ENCODE measurements at regions of chr16 and their contacts with region 1.

Region 1: GRCh38 chr16:50665128-50665878 is 15.8 kb downstream of the SNX20 start:
- DNase-seq: peak; percentile 69 to 92 (median 85)
- ATAC-seq: peak; percentile 60
- H3K4me3 ChIP-seq: peak overlapping the region; percentile 58
- H3K4me3 Mint-ChIP-seq: peak overlapping the region; percentile 86
- H3K27ac ChIP-seq: peak overlapping the region in 1 of 2 donors; percentile 18
- H3K27ac Mint-ChIP-seq: peak overlapping the region; percentile 88
- H3K4me1 ChIP-seq: peaks cover 39% of the 10 kb centered on the region
- H3K4me1 Mint-ChIP-seq: peaks cover 44% of the 10 kb centered on the region
- H3K27me3 ChIP-seq: no peaks in the 10 kb centered on the region
- H3K27me3 Mint-ChIP-seq: no peaks in the 10 kb centered on the region
- CTCF ChIP-seq: peak; percentile 89

Region 2: DNA sequence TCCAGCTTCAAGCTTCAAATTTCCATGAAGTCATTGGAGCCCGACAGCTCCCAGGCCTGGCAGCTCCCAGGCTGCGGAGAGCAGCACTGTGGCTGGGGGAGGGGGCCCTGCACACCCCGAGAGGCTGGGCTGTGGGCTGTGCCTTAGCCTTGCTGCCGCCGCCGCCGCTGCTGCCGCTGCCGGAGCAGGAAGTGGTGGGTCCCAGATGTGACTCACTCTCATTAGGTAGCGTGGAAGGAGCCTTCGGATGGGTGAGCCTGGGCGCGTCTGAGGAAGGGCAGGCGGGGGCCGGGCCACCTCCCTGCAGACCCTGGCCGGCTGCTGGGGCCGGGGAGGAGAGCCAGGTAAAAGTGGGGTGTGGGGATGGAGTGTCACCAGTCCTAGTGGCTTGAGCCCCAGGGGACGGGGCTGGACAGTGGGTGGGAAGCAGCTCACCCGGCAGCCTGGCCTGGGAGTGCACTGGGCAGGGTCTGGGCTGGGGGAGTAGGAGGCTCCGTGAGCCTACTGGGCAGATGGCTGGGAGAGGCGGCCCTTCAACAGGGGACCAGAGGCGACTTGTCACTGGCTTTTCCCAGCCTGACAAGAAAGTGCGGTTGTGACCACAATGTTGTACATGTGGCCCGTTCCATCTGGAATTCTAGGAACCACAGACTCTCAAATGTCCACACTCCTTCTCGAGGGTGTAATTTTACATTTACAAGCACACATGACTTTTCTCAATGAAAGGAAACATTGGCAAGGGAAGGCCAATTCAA is 398.8 kb before region 1 on chr16 and contains the start of gene ADCY7:
- CTCF ChIA-PET with region 1: interaction called, 3 read pairs
- POLR2A ChIA-PET with region 1: no interaction called
- intact Hi-C with region 1: loop called in 1 of 2 experiments (anchors 5 kb)
- DNase-seq: peak; percentile 66 to 90 (median 86)
- ATAC-seq: peak; percentile 91
- H3K4me3 ChIP-seq: peak within 1 kb of the TSS; percentile 98
- H3K4me3 Mint-ChIP-seq: peak within 1 kb of the TSS; percentile 99
- H3K27ac ChIP-seq: peak within 1 kb of the TSS; percentile 87 to 97
- H3K27ac Mint-ChIP-seq: peak within 1 kb of the TSS; percentile 100
- H3K4me1 ChIP-seq: peaks cover 65% of the 10 kb centered on the region
- H3K4me1 Mint-ChIP-seq: peaks cover 73% of the 10 kb centered on the region
- H3K27me3 ChIP-seq: no peaks in the 10 kb centered on the region
- H3K27me3 Mint-ChIP-seq: no peaks in the 10 kb centered on the region
- CTCF ChIP-seq: no peak
- total RNA-seq, gene ADCY7: 136 to 147 TPM

Region 3: DNA sequence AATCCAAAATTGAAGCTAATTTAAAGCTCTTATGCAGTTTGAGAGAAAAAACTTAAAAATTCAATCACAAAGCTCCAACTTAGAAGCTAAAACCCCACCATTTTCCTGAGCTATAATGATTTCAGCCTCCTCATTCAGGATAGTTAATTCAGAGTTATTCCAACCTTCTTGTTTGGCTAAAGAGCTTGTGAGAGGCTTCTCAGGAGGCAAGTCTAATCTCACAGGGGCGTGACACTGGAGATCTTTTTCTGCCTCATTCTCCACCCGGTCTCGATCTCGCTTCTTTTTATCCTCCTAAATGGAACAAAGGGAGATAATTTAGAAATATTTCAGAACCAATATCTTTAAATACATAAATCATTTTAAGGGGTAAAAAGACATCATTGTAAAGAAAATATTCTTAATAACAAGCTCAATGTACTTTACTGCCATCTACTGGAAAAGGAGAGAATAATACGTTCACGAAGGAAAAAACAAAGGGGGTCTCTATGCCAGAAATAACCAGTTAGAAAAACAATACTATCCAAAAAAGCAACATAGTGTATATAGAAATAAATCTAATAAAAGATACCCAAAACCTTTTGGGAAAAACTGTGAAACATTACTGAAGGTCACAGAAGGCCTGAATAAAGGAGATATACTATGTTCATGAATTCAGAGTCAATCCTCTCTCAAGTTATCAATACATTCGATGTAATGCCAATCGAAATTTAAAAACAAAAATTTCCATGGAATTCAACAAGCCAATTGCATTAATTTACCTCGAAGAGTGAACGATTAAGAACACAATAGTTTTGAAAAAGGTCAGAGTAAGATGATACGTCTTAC is 310.5 kb before region 1 on chr16:
- CTCF ChIA-PET with region 1: interaction called, 21 read pairs
- POLR2A ChIA-PET with region 1: interaction called, 7 read pairs
- intact Hi-C with region 1: no loop called
- DNase-seq: peak in 3 of 14 experiments; percentile 49 to 51 (median 50)
- ATAC-seq: peak; percentile 55
- H3K4me3 ChIP-seq: no peak overlapping the region
- H3K4me3 Mint-ChIP-seq: no peak overlapping the region
- H3K27ac ChIP-seq: no peak overlapping the region
- H3K27ac Mint-ChIP-seq: peak overlapping the region; percentile 80
- H3K4me1 ChIP-seq: peaks cover 3% of the 10 kb centered on the region
- H3K4me1 Mint-ChIP-seq: peaks cover 52% of the 10 kb centered on the region
- H3K27me3 ChIP-seq: no peaks in the 10 kb centered on the region
- H3K27me3 Mint-ChIP-seq: no peaks in the 10 kb centered on the region
- CTCF ChIP-seq: peak; percentile 95

Region 4: GRCh38 chr16:50548125-50548908 is 117.0 kb before region 1 on chr16 and contains the start of gene NKD1:
- CTCF ChIA-PET with region 1: interaction called, 6 read pairs
- POLR2A ChIA-PET with region 1: no interaction called
- intact Hi-C with region 1: loop called in 1 of 2 experiments (anchors 5 kb)
- DNase-seq: peak; percentile 56 to 89 (median 71)
- ATAC-seq: peak; percentile 66
- H3K4me3 ChIP-seq: peak within 1 kb of the TSS; percentile 75
- H3K4me3 Mint-ChIP-seq: peak within 1 kb of the TSS; percentile 93
- H3K27ac ChIP-seq: peak within 1 kb of the TSS in 1 of 2 donors; percentile 65
- H3K27ac Mint-ChIP-seq: peak within 1 kb of the TSS; percentile 88
- H3K4me1 ChIP-seq: peaks cover 39% of the 10 kb centered on the region
- H3K4me1 Mint-ChIP-seq: peaks cover 48% of the 10 kb centered on the region
- H3K27me3 ChIP-seq: no peaks in the 10 kb centered on the region
- H3K27me3 Mint-ChIP-seq: no peaks in the 10 kb centered on the region
- CTCF ChIP-seq: no peak
- total RNA-seq, gene NKD1: 6.1 to 9.8 TPM

Region 5: DNA sequence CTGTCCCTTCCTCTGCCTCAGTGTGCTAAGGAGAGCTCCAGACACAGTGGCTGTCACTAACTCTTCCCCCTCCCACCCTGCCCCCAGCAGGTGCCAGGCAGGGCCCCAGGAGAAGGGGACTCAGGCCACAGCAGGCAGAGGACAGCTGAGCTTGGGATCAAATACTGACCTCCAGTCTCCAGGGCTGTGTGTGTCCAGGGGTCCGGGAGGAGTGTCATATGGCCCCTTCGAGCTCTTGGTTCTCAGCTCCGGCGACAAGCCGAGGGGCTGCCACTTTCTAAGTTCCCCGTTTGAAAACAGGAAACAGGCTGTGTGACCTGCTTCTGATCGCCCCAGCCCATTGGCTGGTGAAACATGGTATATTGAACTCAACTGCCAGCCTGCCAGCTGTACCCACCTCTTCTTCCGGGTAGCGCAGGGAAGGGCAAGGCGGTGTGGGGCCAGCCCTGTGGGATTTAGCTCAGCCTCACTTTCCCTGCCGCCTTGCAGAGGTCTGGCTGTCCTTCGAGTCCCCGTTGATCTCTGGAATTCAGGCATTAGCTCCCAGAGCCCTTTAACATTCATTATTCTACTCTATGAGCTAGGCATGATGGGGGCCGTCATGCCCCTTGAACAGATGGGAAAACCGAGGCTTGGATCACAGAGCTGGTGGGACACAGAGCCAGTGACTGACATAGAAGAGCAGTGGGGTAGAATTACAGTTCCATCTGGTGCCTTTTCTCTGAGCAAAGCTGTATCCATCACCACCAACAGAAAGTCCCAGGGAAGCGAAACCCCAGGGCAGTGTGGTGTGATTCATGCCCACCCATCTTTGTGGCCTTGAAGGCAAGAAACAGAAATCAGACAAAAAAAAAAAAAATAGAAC is 15.9 kb after region 1 on chr16 and contains the start of gene SNX20:
- CTCF ChIA-PET with region 1: interaction called, 53 read pairs
- POLR2A ChIA-PET with region 1: interaction called, 174 read pairs
- intact Hi-C with region 1: loop called (anchors 2 kb)
- DNase-seq: peak in 13 of 14 experiments; percentile 57 to 90 (median 69)
- ATAC-seq: peak; percentile 82
- H3K4me3 ChIP-seq: peak within 1 kb of the TSS; percentile 96
- H3K4me3 Mint-ChIP-seq: peak within 1 kb of the TSS; percentile 97
- H3K27ac ChIP-seq: peak within 1 kb of the TSS; percentile 87 to 92
- H3K27ac Mint-ChIP-seq: peak within 1 kb of the TSS; percentile 84
- H3K4me1 ChIP-seq: peaks cover 91% of the 10 kb centered on the region
- H3K4me1 Mint-ChIP-seq: peaks cover 93% of the 10 kb centered on the region
- H3K27me3 ChIP-seq: no peaks in the 10 kb centered on the region
- H3K27me3 Mint-ChIP-seq: no peaks in the 10 kb centered on the region
- CTCF ChIP-seq: no peak
- total RNA-seq, gene SNX20: 26.6 TPM